ENCODE measurements at regions of chr11 and their contacts with region 1.

Region 1: GRCh38 chr11:105969756-105970155 is 52.3 kb downstream of the MSANTD4 start:
- DNase-seq: no peak
- H3K4me3 ChIP-seq: no peak overlapping the region
- CTCF ChIP-seq: no peak

Region 2: GRCh38 chr11:105899772-105900171 is 70.0 kb before region 1 on chr11:
- in situ Hi-C with region 1: loop called (anchors 5 kb)
- DNase-seq: no peak
- H3K4me3 ChIP-seq: no peak overlapping the region
- CTCF ChIP-seq: no peak

Region 3: DNA sequence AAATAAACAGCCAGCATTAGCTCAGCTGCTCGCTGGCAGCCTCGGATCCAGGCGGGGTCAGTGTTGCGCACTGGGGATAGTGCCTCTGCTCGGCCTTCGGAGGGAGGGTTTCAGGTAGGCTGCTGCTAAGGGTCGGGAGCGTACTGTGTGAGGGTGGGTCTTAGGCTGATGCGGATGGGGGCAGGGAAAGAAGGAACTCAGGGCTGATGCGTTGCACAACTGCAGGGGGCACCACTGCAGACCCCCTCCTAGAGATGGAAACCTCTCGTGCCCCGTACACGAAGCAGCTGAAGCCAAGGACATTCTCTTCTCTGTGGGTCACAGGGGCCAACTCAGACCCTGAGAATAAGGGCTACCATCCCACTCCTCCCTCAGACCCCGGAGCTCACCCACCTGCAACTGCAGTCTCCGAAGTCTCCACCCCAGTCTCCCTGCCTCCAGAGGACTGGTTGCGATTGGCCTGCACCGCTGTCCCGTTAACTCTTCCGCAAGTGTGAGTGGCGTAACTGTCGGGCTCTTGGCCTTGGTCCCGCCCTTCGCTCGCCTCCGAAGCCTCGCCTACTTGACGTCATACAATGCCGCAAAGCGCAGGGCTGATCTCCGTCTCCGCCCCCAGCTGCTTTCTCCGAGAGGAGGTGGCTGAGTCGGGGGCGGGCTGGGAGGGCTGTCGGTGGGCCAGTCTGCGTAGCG is 107.3 kb after region 1 on chr11 and contains the start of gene KBTBD3:
- in situ Hi-C with region 1: no loop called
- DNase-seq: peak; percentile 99
- H3K4me3 ChIP-seq: peak within 1 kb of the TSS; percentile 95
- CTCF ChIP-seq: peak; percentile 59

Region 4: GRCh38 chr11:106228996-106229395 is 259.2 kb after region 1 on chr11:
- in situ Hi-C with region 1: no loop called
- DNase-seq: no peak
- H3K4me3 ChIP-seq: no peak overlapping the region
- CTCF ChIP-seq: no peak

Measured in astrocyte of the cerebellum (primary cell).